ENCODE measurements at regions of chr3 and their contacts with region 1.

Region 1: GRCh38 chr3:151290673-151291072 is 12.3 kb upstream of the P2RY14 start:
- DNase-seq: peak in 1 of 2 experiments; percentile 48
- ATAC-seq: peak; percentile 47 to 54; a peak in 1 of 6 replicates
- H3K4me3 ChIP-seq: no peak overlapping the region
- H3K27ac ChIP-seq: no peak overlapping the region
- H3K4me1 ChIP-seq: no peaks in the 10 kb centered on the region
- CTCF ChIP-seq: peak; percentile 89
- EP300 ChIP-seq: no peak
- POLR2A ChIP-seq: no peak
- RAD21 ChIP-seq: peak; percentile 92 to 94

Region 2: GRCh38 chr3:151305101-151305750 is 14.6 kb after region 1 on chr3:
- CTCF ChIA-PET with region 1: interaction called, 18 read pairs
- POLR2A ChIA-PET with region 1: no interaction called
- DNase-seq: peak; percentile 61 to 82
- ATAC-seq: peak; percentile 97
- H3K4me3 ChIP-seq: no peak overlapping the region
- H3K27ac ChIP-seq: peak overlapping the region; percentile 72 to 84
- H3K4me1 ChIP-seq: peaks cover 26% of the 10 kb centered on the region
- CTCF ChIP-seq: peak; percentile 28; the same call in 1 of the 3 replicates
- EP300 ChIP-seq: peak in 1 of 2 experiments; percentile 40; a peak in 1 of 5 replicates
- POLR2A ChIP-seq: no peak
- RAD21 ChIP-seq: peak; percentile 37 to 46

Measured in A549 (cell line).